ENCODE measurements at regions of chr14 and their contacts with region 1.

Region 1: GRCh38 chr14:73058224-73058921 is at the start of gene RBM25:
- DNase-seq: peak; percentile 91 to 96
- ATAC-seq: peak; percentile 89 to 99 (median 90)
- H3K4me3 ChIP-seq: peak within 1 kb of the TSS; percentile 99
- H3K4me3 Mint-ChIP-seq: no peak within 1 kb of the TSS
- H3K27ac ChIP-seq: peak within 1 kb of the TSS; percentile 96
- H3K27ac Mint-ChIP-seq: no peak within 1 kb of the TSS
- H3K4me1 ChIP-seq: peaks cover 20% of the 10 kb centered on the region
- H3K4me1 Mint-ChIP-seq: peaks cover 21 to 24% of the 10 kb centered on the region in 2 donors
- H3K27me3 ChIP-seq: no peaks in the 10 kb centered on the region
- H3K27me3 Mint-ChIP-seq: no peaks in the 10 kb centered on the region
- CTCF ChIP-seq: no peak
- total RNA-seq, gene RBM25: 180 to 185 (median 182) TPM

Region 2: DNA sequence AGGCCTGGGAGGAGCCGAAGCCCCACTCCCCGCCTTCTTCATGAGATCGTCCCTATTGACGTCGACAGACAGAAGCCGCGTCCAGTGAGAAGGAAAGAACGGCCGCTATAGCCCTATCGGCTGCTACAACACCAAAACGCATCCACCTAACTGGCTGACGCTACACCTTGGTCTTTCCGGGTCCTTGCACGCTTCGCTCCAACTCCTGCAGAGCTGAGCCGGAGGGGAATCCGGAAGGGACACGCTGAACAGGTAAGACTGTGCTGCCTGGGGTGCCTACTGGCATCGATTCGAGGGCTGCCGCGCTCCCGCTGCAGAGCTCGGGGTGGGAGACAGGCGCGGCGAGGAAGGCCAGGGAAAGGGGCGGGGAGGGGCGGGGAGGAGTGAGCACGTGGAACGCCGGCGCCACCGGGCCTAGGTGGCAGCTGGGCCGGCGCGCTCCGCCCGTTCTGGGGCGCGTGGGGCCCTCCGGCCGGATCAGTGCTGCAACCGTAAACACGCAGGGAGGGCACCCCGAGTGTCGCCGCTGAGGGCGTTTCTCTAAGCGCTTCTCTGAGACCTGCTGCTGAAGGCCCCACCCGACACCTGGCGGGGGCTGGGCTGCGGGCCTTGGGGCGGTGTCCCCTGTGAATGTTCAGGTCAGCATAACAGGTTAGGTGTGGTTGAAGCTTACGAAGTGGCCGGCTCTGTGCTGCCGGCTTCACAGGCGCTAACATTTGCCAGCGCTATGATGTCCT is 131.9 kb before region 1 on chr14 and contains the start of gene DCAF4:
- intact Hi-C with region 1: loop called (anchors 2 kb)
- DNase-seq: peak; percentile 80 to 96
- ATAC-seq: peak; percentile 95 to 98 (median 95)
- H3K4me3 ChIP-seq: peak within 1 kb of the TSS; percentile 76
- H3K4me3 Mint-ChIP-seq: peak within 1 kb of the TSS; percentile 93
- H3K27ac ChIP-seq: peak within 1 kb of the TSS; percentile 60
- H3K27ac Mint-ChIP-seq: peak within 1 kb of the TSS; percentile 74 to 83
- H3K4me1 ChIP-seq: peaks cover 17% of the 10 kb centered on the region
- H3K4me1 Mint-ChIP-seq: peaks cover 8 to 18% of the 10 kb centered on the region in 2 donors
- H3K27me3 ChIP-seq: no peaks in the 10 kb centered on the region
- H3K27me3 Mint-ChIP-seq: peaks cover 0 to 7% of the 10 kb centered on the region in 2 donors
- CTCF ChIP-seq: no peak
- total RNA-seq, gene DCAF4: 4.6 to 18.6 (median 16.5) TPM

Region 3: DNA sequence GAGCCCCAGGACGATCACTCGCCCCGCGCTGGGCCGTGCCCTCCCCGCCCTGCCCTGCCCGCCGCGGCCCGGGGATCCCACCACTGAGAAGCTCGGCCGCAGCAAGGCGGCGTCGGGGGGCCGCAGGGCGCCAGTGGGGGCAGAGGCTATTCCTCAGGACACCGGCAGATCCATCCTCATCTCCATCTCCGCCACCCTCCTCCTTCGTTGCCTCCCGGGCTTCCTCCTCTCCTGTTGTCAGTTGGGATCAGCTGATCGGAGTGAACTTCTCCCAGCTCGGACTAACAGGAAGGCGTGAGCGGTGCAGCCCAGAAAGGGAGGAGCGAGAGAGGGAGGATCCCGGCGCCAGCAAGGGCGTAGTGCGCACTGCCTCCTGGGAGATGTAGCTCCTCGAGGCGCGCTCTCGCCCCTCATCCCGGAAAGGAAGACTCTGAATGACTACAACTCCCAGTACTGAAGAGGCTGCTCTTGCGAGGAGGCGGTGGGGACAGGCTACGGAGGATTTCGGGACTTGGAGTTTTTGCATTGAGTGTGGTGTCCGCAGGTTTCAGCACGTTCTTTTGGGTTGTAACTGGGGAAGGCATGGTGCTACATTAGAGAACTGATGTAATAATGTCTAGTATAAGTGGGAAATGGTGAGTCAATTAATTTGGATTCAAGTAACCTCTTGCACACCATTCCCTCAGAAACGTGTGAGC is 31.4 kb before region 1 on chr14 and contains the start of gene ZFYVE1:
- intact Hi-C with region 1: loop called (anchors 1 kb)
- DNase-seq: peak; percentile 69 to 95
- ATAC-seq: peak; percentile 96 to 98 (median 98)
- H3K4me3 ChIP-seq: peak within 1 kb of the TSS; percentile 79
- H3K4me3 Mint-ChIP-seq: peak within 1 kb of the TSS; percentile 98
- H3K27ac ChIP-seq: peak within 1 kb of the TSS; percentile 57
- H3K27ac Mint-ChIP-seq: peak within 1 kb of the TSS; percentile 83 to 94
- H3K4me1 ChIP-seq: peaks cover 10% of the 10 kb centered on the region
- H3K4me1 Mint-ChIP-seq: peaks cover 38 to 39% of the 10 kb centered on the region in 2 donors
- H3K27me3 ChIP-seq: no peaks in the 10 kb centered on the region
- H3K27me3 Mint-ChIP-seq: no peaks in the 10 kb centered on the region
- CTCF ChIP-seq: no peak
- total RNA-seq, gene ZFYVE1: 24.1 to 28.6 (median 25.6) TPM

Region 4: GRCh38 chr14:73136387-73137225 is 78.2 kb after region 1 on chr14 and contains the start of gene PSEN1:
- intact Hi-C with region 1: loop called (anchors 1 kb)
- DNase-seq: peak; percentile 99
- ATAC-seq: peak; percentile 93 to 96 (median 94)
- H3K4me3 ChIP-seq: peak within 1 kb of the TSS; percentile 85
- H3K4me3 Mint-ChIP-seq: peak within 1 kb of the TSS; percentile 97
- H3K27ac ChIP-seq: peak within 1 kb of the TSS; percentile 96
- H3K27ac Mint-ChIP-seq: peak within 1 kb of the TSS; percentile 96 to 100
- H3K4me1 ChIP-seq: peaks cover 17% of the 10 kb centered on the region
- H3K4me1 Mint-ChIP-seq: peaks cover 24 to 29% of the 10 kb centered on the region in 2 donors
- H3K27me3 ChIP-seq: no peaks in the 10 kb centered on the region
- H3K27me3 Mint-ChIP-seq: no peaks in the 10 kb centered on the region
- CTCF ChIP-seq: no peak
- total RNA-seq, gene PSEN1: 47.1 to 62.6 (median 55.2) TPM